HepG2 (cell line): ENCODE measurements at regions of chr18 and their contacts with region 1.

Region 1: GRCh38 chr18:58671111-58671631 is at the start of gene MALT1:
- DNase-seq: peak; percentile 77
- ATAC-seq: peak; percentile 88
- H3K4me3 ChIP-seq: peak within 1 kb of the TSS; percentile 90 to 94 (median 90)
- H3K27ac ChIP-seq: peak within 1 kb of the TSS; percentile 86
- H3K4me1 ChIP-seq: peaks cover 62% of the 10 kb centered on the region
- H3K27me3 ChIP-seq: no peaks in the 10 kb centered on the region; a peak in 1 of 5 replicates
- CTCF ChIP-seq: no peak
- EP300 ChIP-seq: no peak; a peak in 1 of 4 replicates
- POLR2A ChIP-seq: peak; percentile 78 to 85
- RAD21 ChIP-seq: no peak
- total RNA-seq, gene MALT1: 43.9 and 58.3 TPM in 2 replicates

Region 2: GRCh38 chr18:58015065-58015780 is 655.9 kb before region 1 on chr18:
- CTCF ChIA-PET with region 1: no interaction called
- POLR2A ChIA-PET with region 1: no interaction called
- in situ Hi-C with region 1: loop called (anchors 25 kb)
- intact Hi-C with region 1: no loop called
- DNase-seq: no peak
- ATAC-seq: no peak
- H3K4me3 ChIP-seq: no peak overlapping the region
- H3K27ac ChIP-seq: peak overlapping the region; percentile 70
- H3K4me1 ChIP-seq: peaks cover 94% of the 10 kb centered on the region
- H3K27me3 ChIP-seq: no peaks in the 10 kb centered on the region
- CTCF ChIP-seq: no peak
- EP300 ChIP-seq: no peak
- POLR2A ChIP-seq: no peak
- RAD21 ChIP-seq: no peak

Region 3: DNA sequence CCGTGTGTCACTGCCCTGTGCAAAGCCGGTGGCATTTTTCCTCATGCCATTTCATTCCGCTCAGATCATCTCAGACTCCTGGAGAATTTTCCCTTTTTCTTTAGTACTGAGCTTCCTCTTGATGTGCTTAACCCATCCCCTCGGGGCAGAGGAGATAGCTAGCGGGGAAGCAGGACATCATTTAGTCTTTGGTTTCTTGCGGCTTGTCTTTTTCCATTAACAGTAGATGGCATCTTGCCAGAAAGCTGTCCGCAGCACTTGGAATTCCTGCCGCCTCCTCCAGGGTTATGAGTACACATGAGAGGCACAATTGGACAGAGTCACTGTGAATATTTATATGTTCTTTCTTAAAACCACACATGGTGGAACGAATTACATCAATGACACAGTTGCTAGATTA is 268.9 kb before region 1 on chr18:
- CTCF ChIA-PET with region 1: no interaction called
- POLR2A ChIA-PET with region 1: no interaction called
- in situ Hi-C with region 1: no loop called
- intact Hi-C with region 1: loop called (anchors 5 kb)
- DNase-seq: peak; percentile 58
- ATAC-seq: no peak
- H3K4me3 ChIP-seq: no peak overlapping the region
- H3K27ac ChIP-seq: peak overlapping the region; percentile 98
- H3K4me1 ChIP-seq: peaks cover 100% of the 10 kb centered on the region
- H3K27me3 ChIP-seq: no peaks in the 10 kb centered on the region
- CTCF ChIP-seq: no peak
- EP300 ChIP-seq: no peak
- POLR2A ChIP-seq: no peak
- RAD21 ChIP-seq: no peak

Region 4: DNA sequence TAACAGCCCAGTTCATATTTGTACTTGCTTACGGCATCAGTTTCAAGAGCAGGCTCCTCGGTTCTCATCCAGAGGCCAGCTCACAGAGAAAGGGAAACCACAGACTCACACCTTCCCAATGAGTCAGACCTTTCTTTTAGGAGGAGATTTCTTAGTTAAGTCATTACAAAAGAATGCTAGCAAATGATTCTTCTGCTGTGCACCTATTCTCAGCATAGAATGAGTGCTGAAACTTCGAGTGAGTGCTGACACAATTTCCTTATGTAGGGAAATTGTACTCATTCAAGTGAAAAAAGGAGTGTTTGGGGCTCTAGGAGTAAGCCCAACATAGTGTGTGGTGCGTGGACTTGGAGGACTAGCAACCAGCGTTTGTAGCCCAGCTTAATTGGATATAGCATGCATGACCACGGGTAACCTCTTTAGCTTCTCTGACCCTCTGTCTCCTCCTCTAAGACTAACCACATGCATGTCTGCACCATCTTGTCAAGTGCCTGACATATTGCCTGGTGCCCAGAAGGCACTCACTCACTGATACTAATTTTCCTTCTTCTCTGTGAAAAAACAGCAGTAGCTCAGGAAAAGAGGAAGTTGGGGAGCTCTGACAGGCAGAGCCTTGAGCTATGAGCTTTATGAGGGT is 129.3 kb before region 1 on chr18:
- CTCF ChIA-PET with region 1: no interaction called
- POLR2A ChIA-PET with region 1: interaction called, 5 read pairs
- in situ Hi-C with region 1: no loop called
- intact Hi-C with region 1: loop called (anchors 1 kb)
- DNase-seq: peak; percentile 41
- ATAC-seq: no peak
- H3K4me3 ChIP-seq: no peak overlapping the region
- H3K27ac ChIP-seq: no peak overlapping the region
- H3K4me1 ChIP-seq: peaks cover 92% of the 10 kb centered on the region
- H3K27me3 ChIP-seq: no peaks in the 10 kb centered on the region
- CTCF ChIP-seq: no peak
- EP300 ChIP-seq: no peak
- POLR2A ChIP-seq: no peak
- RAD21 ChIP-seq: no peak

Region 5: DNA sequence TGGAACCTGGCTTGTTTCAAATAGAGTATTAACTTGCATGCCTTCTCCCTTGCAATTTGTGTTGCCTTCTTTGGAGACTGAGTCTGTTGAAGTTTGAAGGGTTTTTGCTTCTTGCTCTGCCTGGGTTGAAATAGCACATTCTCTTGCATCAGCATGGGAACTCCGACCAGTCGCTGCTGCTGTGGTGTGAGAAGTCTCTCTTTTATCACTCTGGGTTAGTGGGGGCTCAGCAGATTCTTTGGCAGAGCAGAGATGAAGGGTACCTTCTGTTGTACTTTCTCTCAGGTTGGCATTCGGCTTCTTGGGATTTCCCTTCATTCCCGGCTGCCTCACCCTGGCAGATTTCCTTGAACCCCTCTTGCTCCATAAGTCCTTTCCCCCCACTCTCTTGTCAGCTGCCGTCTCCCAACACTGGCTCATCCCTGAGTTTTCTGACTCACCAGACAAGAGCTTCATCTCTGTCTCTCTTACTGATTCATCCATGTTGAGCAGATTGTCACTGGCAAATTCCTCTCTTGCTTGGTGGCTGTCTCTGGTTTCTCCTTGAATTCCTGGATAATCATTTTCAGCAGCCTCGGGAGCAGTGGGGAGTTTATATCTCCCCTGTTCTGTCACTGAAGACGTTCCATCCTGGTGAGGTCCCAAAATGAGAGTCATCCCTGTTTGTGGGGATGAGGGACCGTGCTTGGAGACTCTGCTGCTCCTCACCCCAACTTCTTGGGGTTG is 92.2 kb before region 1 on chr18:
- CTCF ChIA-PET with region 1: no interaction called
- POLR2A ChIA-PET with region 1: interaction called, 4 read pairs
- in situ Hi-C with region 1: loop called (anchors 10 kb)
- intact Hi-C with region 1: loop called (anchors 5 kb)
- DNase-seq: peak; percentile 28
- ATAC-seq: peak; percentile 52
- H3K4me3 ChIP-seq: peak overlapping the region; percentile 57 to 66 (median 65)
- H3K27ac ChIP-seq: no peak overlapping the region
- H3K4me1 ChIP-seq: peaks cover 42% of the 10 kb centered on the region
- H3K27me3 ChIP-seq: no peaks in the 10 kb centered on the region
- CTCF ChIP-seq: no peak
- EP300 ChIP-seq: no peak
- POLR2A ChIP-seq: no peak
- RAD21 ChIP-seq: no peak

Region 6: GRCh38 chr18:58584200-58585127 is 86.7 kb before region 1 on chr18:
- CTCF ChIA-PET with region 1: no interaction called
- POLR2A ChIA-PET with region 1: interaction called, 4 read pairs
- in situ Hi-C with region 1: loop called (anchors 10 kb)
- intact Hi-C with region 1: loop called (anchors 5 kb)
- DNase-seq: no peak
- ATAC-seq: no peak
- H3K4me3 ChIP-seq: no peak overlapping the region
- H3K27ac ChIP-seq: no peak overlapping the region
- H3K4me1 ChIP-seq: peaks cover 13% of the 10 kb centered on the region
- H3K27me3 ChIP-seq: peaks cover 0 to 2% of the 10 kb centered on the region in 2 experiments; a peak in 2 of 5 replicates
- CTCF ChIP-seq: no peak
- EP300 ChIP-seq: no peak
- POLR2A ChIP-seq: no peak
- RAD21 ChIP-seq: no peak

Region 7: DNA sequence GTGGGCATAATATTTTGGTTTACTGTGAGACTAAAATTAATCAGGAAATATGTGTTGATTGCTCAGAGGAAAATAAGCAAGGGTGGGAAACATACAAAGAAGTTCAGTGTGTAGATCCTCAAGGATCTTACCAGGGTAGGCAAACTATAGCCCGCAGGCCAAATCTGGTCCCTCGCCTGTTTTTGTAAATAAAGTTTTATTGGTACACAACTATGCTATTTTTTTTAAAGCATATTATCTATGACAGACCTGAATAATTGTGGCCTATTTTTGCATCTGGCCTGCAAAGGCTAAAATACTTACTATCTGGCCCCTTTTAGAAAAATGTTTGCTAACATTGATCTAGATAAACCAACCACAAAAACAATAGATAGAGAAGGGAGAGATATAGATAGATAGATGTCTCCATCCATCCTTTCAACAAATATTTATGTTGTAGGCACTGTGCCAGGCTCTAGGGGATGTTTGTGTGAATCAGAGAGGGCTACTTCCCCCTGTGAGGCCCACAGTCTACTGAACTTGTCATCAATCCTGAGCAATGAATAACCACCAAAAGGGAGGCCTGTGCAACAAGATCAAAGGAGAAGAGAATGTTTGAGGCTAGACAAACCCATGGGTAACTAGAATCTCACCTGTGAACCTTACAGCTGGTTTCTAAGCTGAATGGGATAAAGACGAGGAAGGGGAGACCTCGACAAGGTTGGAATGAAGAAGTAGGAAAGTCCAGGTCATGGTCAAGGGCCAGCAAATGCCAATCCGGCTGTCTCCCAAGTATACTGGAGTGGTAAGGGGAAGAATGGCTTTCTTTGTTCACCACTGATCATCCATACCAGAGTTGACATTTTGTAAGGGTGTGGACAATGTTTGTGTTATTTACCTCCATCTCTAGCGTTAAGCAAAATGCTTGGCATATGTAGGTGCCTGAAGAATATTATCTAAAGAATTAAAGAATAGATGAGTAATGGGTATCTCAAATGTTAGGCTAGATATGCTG is 65.8 kb before region 1 on chr18:
- CTCF ChIA-PET with region 1: no interaction called
- POLR2A ChIA-PET with region 1: interaction called, 4 read pairs
- in situ Hi-C with region 1: no loop called
- intact Hi-C with region 1: loop called (anchors 2 kb)
- DNase-seq: peak; percentile 99
- ATAC-seq: peak; percentile 92
- H3K4me3 ChIP-seq: no peak overlapping the region
- H3K27ac ChIP-seq: peak overlapping the region; percentile 45
- H3K4me1 ChIP-seq: peaks cover 78% of the 10 kb centered on the region
- H3K27me3 ChIP-seq: no peaks in the 10 kb centered on the region
- CTCF ChIP-seq: no peak
- EP300 ChIP-seq: peak in 1 of 2 experiments; percentile 95; a peak in 3 of 4 replicates
- POLR2A ChIP-seq: no peak
- RAD21 ChIP-seq: no peak